Endothelial cell of umbilical vein (primary cell): ENCODE measurements at regions of chr3 and their contacts with region 1.

Region 1: GRCh38 chr3:32401556-32402081 is 10.0 kb downstream of the CMTM7 start:
- DNase-seq: peak; percentile 96
- H3K4me3 ChIP-seq: peak overlapping the region in 2 of 3 experiments; percentile 9 to 47
- H3K27ac ChIP-seq: peak overlapping the region; percentile 89
- H3K4me1 ChIP-seq: peaks cover 34% of the 10 kb centered on the region
- H3K27me3 ChIP-seq: no peaks in the 10 kb centered on the region
- CTCF ChIP-seq: no peak
- POLR2A ChIP-seq: peak; percentile 64

Region 2: GRCh38 chr3:32026593-32026992 is 375.0 kb before region 1 on chr3:
- CTCF ChIA-PET with region 1: no interaction called
- POLR2A ChIA-PET with region 1: no interaction called
- dilution Hi-C with region 1: no loop called
- intact Hi-C with region 1: no loop called
- DNase-seq: no peak
- H3K4me3 ChIP-seq: no peak overlapping the region
- H3K27ac ChIP-seq: no peak overlapping the region
- H3K4me1 ChIP-seq: no peaks in the 10 kb centered on the region
- H3K27me3 ChIP-seq: no peaks in the 10 kb centered on the region
- CTCF ChIP-seq: no peak
- POLR2A ChIP-seq: no peak

Region 3: GRCh38 chr3:32177702-32178198 is 223.9 kb before region 1 on chr3:
- CTCF ChIA-PET with region 1: interaction called, 3 read pairs
- POLR2A ChIA-PET with region 1: no interaction called
- dilution Hi-C with region 1: no loop called
- intact Hi-C with region 1: loop called (anchors 1 kb)
- DNase-seq: peak; percentile 91
- H3K4me3 ChIP-seq: no peak overlapping the region
- H3K27ac ChIP-seq: no peak overlapping the region
- H3K4me1 ChIP-seq: peaks cover 6% of the 10 kb centered on the region
- H3K27me3 ChIP-seq: no peaks in the 10 kb centered on the region
- CTCF ChIP-seq: peak; percentile 92 to 95
- POLR2A ChIP-seq: no peak

Region 4: GRCh38 chr3:32296256-32297204 is 105.1 kb before region 1 on chr3:
- CTCF ChIA-PET with region 1: interaction called, 7 read pairs
- POLR2A ChIA-PET with region 1: no interaction called
- dilution Hi-C with region 1: no loop called
- intact Hi-C with region 1: loop called (anchors 1 kb)
- DNase-seq: peak; percentile 68
- H3K4me3 ChIP-seq: no peak overlapping the region
- H3K27ac ChIP-seq: no peak overlapping the region
- H3K4me1 ChIP-seq: peaks cover 3% of the 10 kb centered on the region
- H3K27me3 ChIP-seq: no peaks in the 10 kb centered on the region
- CTCF ChIP-seq: peak; percentile 80 to 86
- POLR2A ChIP-seq: no peak

Region 5: GRCh38 chr3:32374788-32375595 is 26.6 kb before region 1 on chr3:
- CTCF ChIA-PET with region 1: interaction called, 42 read pairs
- POLR2A ChIA-PET with region 1: no interaction called
- dilution Hi-C with region 1: no loop called
- intact Hi-C with region 1: loop called (anchors 1 kb)
- DNase-seq: peak; percentile 80
- H3K4me3 ChIP-seq: no peak overlapping the region
- H3K27ac ChIP-seq: no peak overlapping the region
- H3K4me1 ChIP-seq: peaks cover 9% of the 10 kb centered on the region
- H3K27me3 ChIP-seq: no peaks in the 10 kb centered on the region
- CTCF ChIP-seq: peak; percentile 41 to 48
- POLR2A ChIP-seq: no peak

Region 6: DNA sequence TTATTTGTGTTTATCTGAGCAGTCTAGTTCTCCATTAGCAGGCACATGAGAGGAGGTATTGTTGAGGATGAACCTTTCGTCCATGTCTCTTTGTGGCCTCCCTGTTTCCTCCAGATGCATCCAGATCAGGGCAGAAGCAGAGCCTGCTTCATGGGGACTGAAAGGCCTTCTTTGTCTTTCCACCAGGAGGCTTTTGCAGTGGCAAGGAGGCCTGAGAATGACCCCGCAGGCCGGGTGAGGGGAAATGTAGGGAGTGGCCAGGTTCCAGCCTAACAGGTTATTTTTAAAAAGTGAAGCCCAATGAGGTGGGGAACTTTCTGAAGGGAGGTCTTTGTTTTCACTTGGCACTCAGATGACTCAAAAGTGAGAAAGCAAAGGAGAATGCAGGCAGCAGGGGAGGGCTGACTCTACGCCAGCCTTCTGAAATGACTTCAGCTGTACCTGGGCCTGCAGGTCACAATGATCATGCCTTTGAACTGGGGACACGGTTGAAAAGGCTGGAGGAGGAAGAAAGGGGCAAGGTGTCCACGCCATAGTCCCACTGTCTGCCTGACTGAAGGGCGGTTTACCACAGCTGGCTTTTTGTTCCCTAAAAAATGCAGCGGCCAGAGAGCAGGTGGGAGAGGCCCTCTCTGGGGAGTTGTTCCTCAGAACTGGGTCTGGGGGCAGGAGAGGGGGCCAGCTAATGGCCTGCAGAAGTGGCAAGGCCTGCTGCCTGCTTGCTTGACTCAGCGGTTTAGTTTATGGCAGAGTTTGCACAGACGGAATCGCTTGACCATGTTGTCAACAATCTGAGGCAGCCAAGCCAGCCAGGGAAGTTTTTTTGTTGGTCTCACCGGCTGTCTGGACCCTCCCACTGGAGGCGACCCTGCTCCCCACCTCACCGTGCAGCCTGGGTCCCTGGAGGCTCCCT is 18.8 kb after region 1 on chr3:
- CTCF ChIA-PET with region 1: interaction called, 5 read pairs
- POLR2A ChIA-PET with region 1: no interaction called
- dilution Hi-C with region 1: no loop called
- intact Hi-C with region 1: loop called (anchors 1 kb)
- DNase-seq: peak; percentile 85
- H3K4me3 ChIP-seq: no peak overlapping the region
- H3K27ac ChIP-seq: peak overlapping the region; percentile 92
- H3K4me1 ChIP-seq: peaks cover 57% of the 10 kb centered on the region
- H3K27me3 ChIP-seq: no peaks in the 10 kb centered on the region
- CTCF ChIP-seq: peak; percentile 22 to 25
- POLR2A ChIP-seq: peak; percentile 11

Region 7: DNA sequence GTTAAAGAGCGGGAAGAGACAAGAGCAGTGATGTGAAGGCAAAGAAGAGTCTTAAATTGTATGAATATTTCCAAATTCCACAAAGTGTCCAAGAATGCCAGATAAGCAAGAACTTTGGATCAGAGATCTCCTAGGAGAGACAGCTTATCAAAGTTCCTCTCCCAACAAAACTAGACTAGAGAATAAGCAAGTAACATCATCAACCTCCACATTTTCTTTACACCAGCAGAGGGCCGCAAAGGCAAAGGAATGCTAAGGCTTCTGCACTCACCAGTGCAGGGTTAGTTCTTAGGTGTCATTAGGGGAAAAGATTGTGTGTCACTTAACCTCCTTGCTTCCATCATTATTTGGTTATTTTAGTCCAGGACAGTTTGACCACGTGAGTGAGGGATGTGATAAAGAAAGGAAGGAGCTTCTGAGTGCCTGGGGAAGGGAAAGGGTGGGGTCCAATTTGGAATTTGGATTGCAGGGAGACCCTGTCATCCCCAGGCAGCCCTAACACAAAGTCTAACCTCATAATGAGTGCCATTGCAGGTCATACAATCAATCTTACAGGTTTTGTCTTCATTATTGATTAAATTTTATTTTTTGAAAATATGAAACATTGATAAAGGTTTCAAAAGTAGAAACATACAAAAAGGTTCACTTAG is 108.6 kb after region 1 on chr3:
- CTCF ChIA-PET with region 1: no interaction called
- POLR2A ChIA-PET with region 1: no interaction called
- dilution Hi-C with region 1: no loop called
- intact Hi-C with region 1: no loop called
- DNase-seq: peak; percentile 69
- H3K4me3 ChIP-seq: no peak overlapping the region
- H3K27ac ChIP-seq: no peak overlapping the region
- H3K4me1 ChIP-seq: no peaks in the 10 kb centered on the region
- H3K27me3 ChIP-seq: no peaks in the 10 kb centered on the region
- CTCF ChIP-seq: peak; percentile 58 to 64
- POLR2A ChIP-seq: no peak